ENCODE measurements at regions of chr20 and their contacts with region 1.

Region 1: GRCh38 chr20:59087829-59088433 is 45.3 kb upstream of the PRELID3B start:
- DNase-seq: peak; percentile 75 to 81 (median 79)
- H3K4me3 ChIP-seq: no peak overlapping the region
- H3K4me3 Mint-ChIP-seq: no peak overlapping the region
- H3K27ac ChIP-seq: no peak overlapping the region
- H3K27ac Mint-ChIP-seq: peak overlapping the region in 3 of 7 donors; percentile 46 to 85 (median 65)
- H3K4me1 ChIP-seq: peaks cover 4% of the 10 kb centered on the region
- H3K4me1 Mint-ChIP-seq: peaks cover 0 to 7% (median 4%) of the 10 kb centered on the region in 4 donors
- H3K27me3 ChIP-seq: no peaks in the 10 kb centered on the region
- H3K27me3 Mint-ChIP-seq: peaks cover 0 to 1% of the 10 kb centered on the region in 2 donors

Region 2: DNA sequence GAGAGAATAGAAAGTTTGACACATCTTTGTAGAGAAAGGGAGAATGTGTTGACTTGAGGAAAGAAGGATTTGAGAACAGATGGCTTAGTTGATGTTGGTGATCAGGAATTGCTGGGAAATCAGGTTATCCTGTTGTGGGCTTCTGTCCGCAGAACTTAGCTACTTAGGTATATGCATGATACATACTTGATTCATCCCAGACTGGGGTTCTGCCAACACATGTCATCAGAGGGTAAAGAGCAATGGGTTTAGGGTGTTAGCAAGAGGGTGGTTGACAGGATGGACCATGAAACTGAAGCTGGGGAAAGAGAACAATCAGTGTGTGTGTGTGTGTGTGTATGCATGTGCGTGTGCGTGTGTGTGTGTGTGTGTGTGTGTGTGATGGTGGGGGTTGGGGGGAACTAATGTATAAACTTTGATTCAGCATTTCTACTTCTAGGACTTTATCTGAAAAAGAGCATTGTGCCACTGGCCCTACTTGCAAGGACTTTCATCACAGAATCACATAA is 157.4 kb before region 1 on chr20:
- CTCF ChIA-PET with region 1: no interaction called
- POLR2A ChIA-PET with region 1: no interaction called
- intact Hi-C with region 1: no loop called
- DNase-seq: no peak
- H3K4me3 ChIP-seq: no peak overlapping the region
- H3K4me3 Mint-ChIP-seq: no peak overlapping the region
- H3K27ac ChIP-seq: no peak overlapping the region
- H3K27ac Mint-ChIP-seq: no peak overlapping the region
- H3K4me1 ChIP-seq: no peaks in the 10 kb centered on the region
- H3K4me1 Mint-ChIP-seq: no peaks in the 10 kb centered on the region
- H3K27me3 ChIP-seq: no peaks in the 10 kb centered on the region
- H3K27me3 Mint-ChIP-seq: peaks cover 20 to 22% of the 10 kb centered on the region in 2 donors

Region 3: DNA sequence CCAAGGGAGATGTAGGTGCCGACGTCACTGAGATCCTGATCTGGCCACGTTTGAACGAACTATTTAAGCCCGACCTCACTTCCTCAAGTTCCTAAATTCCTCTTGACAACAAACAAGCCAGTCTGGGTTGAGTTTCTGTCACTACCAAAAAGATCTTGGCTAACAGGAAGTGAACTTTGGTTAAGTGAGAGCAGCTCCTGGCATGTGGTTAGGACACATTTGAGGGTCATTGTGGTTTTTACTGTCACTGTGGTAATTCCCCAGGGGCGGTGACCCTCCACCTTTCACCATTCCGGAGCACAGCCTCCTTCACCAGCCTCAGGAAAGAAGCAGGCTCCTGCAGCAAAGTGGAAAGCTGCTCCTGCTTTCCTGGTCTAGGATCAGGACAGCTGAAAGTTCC is 32.6 kb after region 1 on chr20:
- CTCF ChIA-PET with region 1: interaction called, 72 read pairs
- POLR2A ChIA-PET with region 1: interaction called, 18 read pairs
- intact Hi-C with region 1: loop called (anchors 1 kb)
- DNase-seq: peak; percentile 52 to 69 (median 64)
- H3K4me3 ChIP-seq: no peak overlapping the region
- H3K4me3 Mint-ChIP-seq: peak overlapping the region; percentile 32 to 89 (median 71)
- H3K27ac ChIP-seq: peak overlapping the region; percentile 80
- H3K27ac Mint-ChIP-seq: peak overlapping the region; percentile 94 to 100 (median 99)
- H3K4me1 ChIP-seq: peaks cover 86% of the 10 kb centered on the region
- H3K4me1 Mint-ChIP-seq: peaks cover 66 to 94% (median 86%) of the 10 kb centered on the region in 4 donors
- H3K27me3 ChIP-seq: no peaks in the 10 kb centered on the region
- H3K27me3 Mint-ChIP-seq: no peaks in the 10 kb centered on the region

Region 4: DNA sequence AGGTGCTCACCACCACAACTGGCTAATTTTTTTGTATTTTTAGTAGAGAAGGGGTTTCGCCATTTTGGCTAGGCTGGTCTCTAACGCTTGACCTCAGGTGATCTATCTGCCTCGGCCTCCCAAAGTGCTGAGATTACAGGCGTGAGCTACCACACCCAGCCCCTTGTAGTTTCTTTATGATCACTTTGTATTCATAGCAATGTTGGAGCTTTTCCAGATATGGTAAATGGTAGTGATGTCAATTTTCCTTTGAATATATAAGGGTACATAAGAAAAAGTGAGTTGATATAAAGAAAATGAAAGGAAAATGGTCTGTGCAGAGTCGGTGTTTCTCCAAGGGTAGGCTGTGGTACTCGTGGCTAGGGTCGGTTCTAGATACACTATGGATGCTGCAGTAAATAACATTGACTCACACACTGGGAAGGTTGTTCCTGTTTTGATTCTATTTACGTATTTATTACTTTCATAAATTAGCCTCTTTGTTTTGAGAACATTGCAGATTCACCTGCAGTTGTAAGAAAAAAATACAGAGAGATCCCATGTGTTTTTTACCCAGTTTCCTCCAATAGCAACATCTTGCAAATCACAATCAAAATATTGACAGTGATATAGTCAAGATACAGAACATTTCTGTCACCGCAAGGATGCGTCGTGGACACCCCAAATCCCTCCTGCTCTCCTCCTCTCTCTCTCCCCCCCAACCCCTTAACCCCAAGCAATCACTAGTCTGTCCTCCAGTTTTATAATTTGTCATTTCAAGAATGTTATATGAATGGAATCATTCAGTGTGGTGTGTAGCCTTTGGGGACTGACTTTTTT is 78.2 kb after region 1 on chr20:
- CTCF ChIA-PET with region 1: interaction called, 20 read pairs
- POLR2A ChIA-PET with region 1: interaction called, 14 read pairs
- intact Hi-C with region 1: loop called (anchors 5 kb)
- DNase-seq: peak; percentile 70 to 83 (median 80)
- H3K4me3 ChIP-seq: peak overlapping the region; percentile 61 to 64
- H3K4me3 Mint-ChIP-seq: peak overlapping the region; percentile 84 to 96 (median 88)
- H3K27ac ChIP-seq: peak overlapping the region; percentile 97
- H3K27ac Mint-ChIP-seq: peak overlapping the region; percentile 97 to 99 (median 99)
- H3K4me1 ChIP-seq: peaks cover 88% of the 10 kb centered on the region
- H3K4me1 Mint-ChIP-seq: peaks cover 72 to 98% (median 82%) of the 10 kb centered on the region in 4 donors
- H3K27me3 ChIP-seq: no peaks in the 10 kb centered on the region
- H3K27me3 Mint-ChIP-seq: no peaks in the 10 kb centered on the region

Region 5: DNA sequence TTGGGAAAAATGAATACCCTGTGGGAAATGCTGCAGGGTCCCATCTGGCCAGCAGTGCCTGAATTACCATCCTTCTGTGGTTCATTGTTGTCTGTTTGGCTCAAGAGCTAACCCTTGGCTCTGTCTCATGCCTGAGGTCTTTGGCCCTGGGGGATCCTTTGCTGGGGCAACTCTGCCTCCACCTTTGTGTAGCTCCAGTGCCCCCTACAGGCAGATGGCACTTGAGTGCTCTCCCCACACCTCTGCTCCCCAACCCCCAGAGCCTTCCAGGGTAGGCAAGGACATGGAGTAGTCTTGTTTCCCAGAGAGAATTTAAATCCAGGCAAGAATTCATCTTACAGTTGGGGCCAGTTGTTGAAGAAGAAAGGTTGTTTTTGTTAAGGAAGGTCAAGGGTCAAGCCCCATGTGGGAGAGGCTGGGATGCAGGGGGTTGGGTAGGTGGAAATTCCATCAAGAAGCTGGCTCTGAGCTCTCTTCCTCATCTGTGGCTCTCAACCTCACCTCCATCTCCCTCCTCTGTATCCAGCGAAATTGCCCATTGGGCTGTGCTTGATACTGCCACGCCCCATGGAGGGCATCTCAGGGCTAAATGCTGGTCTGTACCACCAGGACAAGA is 119.9 kb after region 1 on chr20:
- CTCF ChIA-PET with region 1: interaction called, 239 read pairs
- POLR2A ChIA-PET with region 1: interaction called, 28 read pairs
- intact Hi-C with region 1: loop called (anchors 1 kb)
- DNase-seq: peak; percentile 76 to 79 (median 78)
- H3K4me3 ChIP-seq: no peak overlapping the region
- H3K4me3 Mint-ChIP-seq: peak overlapping the region in 4 of 8 donors; percentile 15 to 53 (median 33)
- H3K27ac ChIP-seq: no peak overlapping the region
- H3K27ac Mint-ChIP-seq: peak overlapping the region; percentile 35 to 95 (median 88)
- H3K4me1 ChIP-seq: peaks cover 14% of the 10 kb centered on the region
- H3K4me1 Mint-ChIP-seq: peaks cover 29 to 55% (median 35%) of the 10 kb centered on the region in 4 donors
- H3K27me3 ChIP-seq: no peaks in the 10 kb centered on the region
- H3K27me3 Mint-ChIP-seq: no peaks in the 10 kb centered on the region

Region 6: DNA sequence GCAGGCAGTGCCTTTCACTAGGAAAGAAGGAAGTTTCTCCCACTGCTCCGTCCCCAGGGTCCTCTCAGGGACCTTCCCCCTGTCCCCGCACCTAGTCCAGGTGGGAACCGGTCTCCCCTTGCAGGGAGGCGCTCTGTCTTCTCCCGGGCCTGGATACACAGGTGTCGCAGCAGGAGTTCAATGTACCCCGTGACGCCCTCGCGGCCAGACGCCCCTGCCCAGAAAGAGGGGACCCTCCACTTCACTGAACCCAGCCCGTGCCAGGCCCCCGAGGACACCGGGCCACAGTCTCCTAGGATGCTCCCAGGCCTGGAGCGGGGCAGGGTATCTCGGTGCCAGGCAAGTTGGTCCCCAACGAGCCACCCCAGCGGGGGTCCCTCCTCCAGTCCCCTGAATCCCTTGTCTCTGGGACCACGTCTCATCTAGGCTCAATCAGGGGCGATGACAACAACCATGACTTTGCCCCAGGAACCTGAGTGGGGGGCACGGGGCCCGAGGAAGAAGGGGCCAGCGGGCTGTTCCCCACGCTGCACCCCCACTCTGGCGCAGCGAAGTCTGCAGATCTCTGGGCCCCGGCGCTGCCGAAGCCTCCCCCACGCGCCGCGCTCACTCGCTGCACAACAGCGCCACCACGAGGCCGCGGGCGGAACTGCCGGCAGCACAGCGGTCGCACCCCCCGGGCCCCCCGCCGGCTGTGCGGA is 315.5 kb after region 1 on chr20:
- CTCF ChIA-PET with region 1: interaction called, 5 read pairs
- POLR2A ChIA-PET with region 1: no interaction called
- intact Hi-C with region 1: loop called (anchors 1 kb)
- DNase-seq: peak; percentile 50 to 75 (median 62)
- H3K4me3 ChIP-seq: peak overlapping the region in 1 of 2 donors; percentile 33
- H3K4me3 Mint-ChIP-seq: peak overlapping the region in 4 of 8 donors; percentile 49 to 77 (median 76)
- H3K27ac ChIP-seq: no peak overlapping the region
- H3K27ac Mint-ChIP-seq: peak overlapping the region in 2 of 7 donors; percentile 49 to 55
- H3K4me1 ChIP-seq: peaks cover 32% of the 10 kb centered on the region
- H3K4me1 Mint-ChIP-seq: peaks cover 0 to 4% (median under 1%) of the 10 kb centered on the region in 4 donors
- H3K27me3 ChIP-seq: no peaks in the 10 kb centered on the region
- H3K27me3 Mint-ChIP-seq: peaks cover 17 to 22% of the 10 kb centered on the region in 2 donors

Measured in CD4-positive, alpha-beta memory T cell (primary cell).